ENCODE measurements at regions of chr6 and their contacts with region 1.

Region 1: DNA sequence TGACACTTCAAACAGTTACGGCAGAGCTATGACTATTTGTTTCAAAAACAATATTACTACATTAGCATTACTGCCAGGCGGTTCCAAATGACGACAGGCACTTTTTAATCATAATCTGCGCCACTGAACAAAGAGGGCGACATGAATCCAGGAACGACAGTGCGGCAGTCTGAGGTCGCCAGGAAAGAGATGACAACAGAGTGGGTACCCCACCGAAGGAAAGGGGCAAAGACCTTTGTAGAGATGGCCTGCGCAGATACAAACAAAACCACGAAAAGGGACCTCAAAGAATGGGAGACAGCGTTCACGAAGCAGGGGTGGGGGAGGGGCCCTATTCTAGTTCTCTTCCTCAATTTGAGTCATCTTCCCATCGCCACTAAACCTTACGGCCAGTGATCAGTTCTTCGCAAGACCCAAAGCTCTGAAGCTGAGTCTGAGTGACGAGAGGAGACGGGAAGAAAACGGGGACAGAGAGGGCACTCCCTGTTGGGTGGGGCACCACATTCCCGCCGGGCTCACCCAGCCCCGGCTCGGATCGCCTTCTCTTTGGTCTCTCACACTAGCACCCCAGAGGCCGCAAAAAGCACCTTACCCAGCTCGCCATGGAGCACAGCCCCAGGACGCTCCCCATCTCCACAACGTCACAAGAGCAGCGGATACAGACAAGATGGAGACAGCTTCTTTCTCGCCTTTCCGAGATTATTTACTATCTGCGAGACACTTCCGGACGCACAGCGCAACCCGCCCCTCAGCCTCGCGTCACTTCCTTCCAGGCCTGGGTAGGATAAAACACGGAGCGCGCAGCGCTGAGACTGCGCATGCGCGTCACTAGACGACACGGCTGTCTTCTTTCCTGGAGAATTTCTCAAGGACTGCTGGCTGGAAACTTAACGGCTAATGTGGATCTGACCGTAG is at the start of gene SERINC1:
- DNase-seq: peak; percentile 95
- H3K4me3 Mint-ChIP-seq: peak within 1 kb of the TSS; percentile 100
- H3K27ac Mint-ChIP-seq: peak within 1 kb of the TSS; percentile 100
- H3K4me1 Mint-ChIP-seq: peaks cover 39% of the 10 kb centered on the region
- H3K27me3 Mint-ChIP-seq: no peaks in the 10 kb centered on the region
- total RNA-seq, gene SERINC1: 48.2 to 51.1 TPM

Region 2: GRCh38 chr6:122381497-122382265 is 89.7 kb before region 1 on chr6:
- CTCF ChIA-PET with region 1: no interaction called
- POLR2A ChIA-PET with region 1: no interaction called
- intact Hi-C with region 1: loop called (anchors 1 kb)
- DNase-seq: peak; percentile 65
- H3K4me3 Mint-ChIP-seq: no peak overlapping the region
- H3K27ac Mint-ChIP-seq: no peak overlapping the region
- H3K4me1 Mint-ChIP-seq: peaks cover 4% of the 10 kb centered on the region
- H3K27me3 Mint-ChIP-seq: peaks cover 11% of the 10 kb centered on the region

Region 3: GRCh38 chr6:122399384-122400158 is 71.8 kb before region 1 on chr6 and contains the start of gene HSF2:
- CTCF ChIA-PET with region 1: no interaction called
- POLR2A ChIA-PET with region 1: interaction called, 11 read pairs
- intact Hi-C with region 1: loop called (anchors 1 kb)
- DNase-seq: peak; percentile 97
- H3K4me3 Mint-ChIP-seq: peak within 1 kb of the TSS; percentile 95
- H3K27ac Mint-ChIP-seq: peak within 1 kb of the TSS; percentile 91
- H3K4me1 Mint-ChIP-seq: peaks cover 36% of the 10 kb centered on the region
- H3K27me3 Mint-ChIP-seq: no peaks in the 10 kb centered on the region
- total RNA-seq, gene HSF2: 16.0 to 18.5 TPM

Region 4: GRCh38 chr6:122530440-122531046 is 59.2 kb after region 1 on chr6:
- CTCF ChIA-PET with region 1: interaction called, 41 read pairs
- POLR2A ChIA-PET with region 1: no interaction called
- intact Hi-C with region 1: loop called (anchors 1 kb)
- DNase-seq: peak; percentile 40
- H3K4me3 Mint-ChIP-seq: no peak overlapping the region
- H3K27ac Mint-ChIP-seq: no peak overlapping the region
- H3K4me1 Mint-ChIP-seq: no peaks in the 10 kb centered on the region
- H3K27me3 Mint-ChIP-seq: peaks cover 22% of the 10 kb centered on the region

Region 5: DNA sequence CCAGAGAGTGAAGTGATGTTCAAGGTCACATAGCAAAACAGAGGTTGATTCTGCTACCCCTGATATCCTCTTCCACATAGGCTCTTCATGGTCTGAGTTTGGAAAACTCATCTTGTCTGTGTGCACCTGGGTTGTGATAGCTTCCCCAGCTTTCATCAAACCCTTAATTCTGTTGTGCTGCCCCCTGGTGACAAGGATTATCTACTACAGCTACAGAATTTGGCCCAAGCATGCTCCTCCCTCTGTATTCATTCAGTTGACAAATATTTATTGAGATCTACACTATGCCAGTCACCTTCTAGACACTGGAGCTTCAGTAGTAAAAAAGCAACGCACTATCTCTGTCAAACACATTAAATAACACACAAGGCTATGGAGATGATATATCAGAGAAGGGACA is 368.1 kb after region 1 on chr6:
- CTCF ChIA-PET with region 1: no interaction called
- POLR2A ChIA-PET with region 1: no interaction called
- intact Hi-C with region 1: loop called (anchors 10 kb)
- DNase-seq: peak; percentile 50
- H3K4me3 Mint-ChIP-seq: no peak overlapping the region
- H3K27ac Mint-ChIP-seq: no peak overlapping the region
- H3K4me1 Mint-ChIP-seq: no peaks in the 10 kb centered on the region
- H3K27me3 Mint-ChIP-seq: peaks cover 5% of the 10 kb centered on the region